CD8-positive, alpha-beta T cell (primary cell): ENCODE measurements at regions of chr7 and their contacts with region 1.

Region 1: DNA sequence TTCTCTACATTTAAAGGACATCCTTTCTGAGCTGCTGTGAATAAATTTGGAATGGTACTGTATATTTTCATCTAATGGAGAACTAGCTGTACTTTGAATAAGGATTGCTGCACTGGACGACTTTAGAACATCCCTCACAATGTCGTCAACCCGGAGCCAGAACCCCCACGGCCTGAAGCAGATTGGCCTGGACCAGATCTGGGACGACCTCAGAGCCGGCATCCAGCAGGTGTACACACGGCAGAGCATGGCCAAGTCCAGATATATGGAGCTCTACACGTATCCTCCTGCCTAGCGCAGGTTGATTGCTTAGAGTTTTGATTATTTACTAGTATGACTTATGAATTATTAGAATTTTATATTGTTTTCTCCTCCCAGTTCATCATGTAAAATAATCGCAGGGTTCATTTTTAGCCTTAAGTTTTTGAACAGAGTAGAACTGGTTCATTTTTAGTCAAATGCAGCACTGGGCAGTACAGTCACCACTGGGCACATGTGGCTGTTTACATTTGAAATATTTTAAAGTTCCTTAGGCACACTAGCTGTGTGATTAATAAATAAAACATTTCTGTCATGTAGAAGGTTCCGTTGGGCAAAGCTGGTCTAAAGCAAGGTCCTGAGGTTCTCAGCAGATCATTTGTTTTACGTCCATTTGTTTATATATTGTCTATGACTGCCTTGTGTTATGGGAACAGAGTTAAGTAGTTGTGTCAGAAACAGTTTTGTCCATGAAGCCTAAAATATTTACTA is 31.5 kb downstream of the CUL1 start:
- DNase-seq: no peak
- ATAC-seq: no peak
- H3K4me3 ChIP-seq: no peak overlapping the region
- H3K4me3 Mint-ChIP-seq: no peak overlapping the region
- H3K27ac ChIP-seq: no peak overlapping the region
- H3K27ac Mint-ChIP-seq: no peak overlapping the region
- H3K4me1 ChIP-seq: peaks cover 30% of the 10 kb centered on the region
- H3K4me1 Mint-ChIP-seq: peaks cover 66% of the 10 kb centered on the region
- H3K27me3 ChIP-seq: no peaks in the 10 kb centered on the region
- H3K27me3 Mint-ChIP-seq: no peaks in the 10 kb centered on the region
- CTCF ChIP-seq: no peak

Region 2: GRCh38 chr7:148067381-148067780 is 662.8 kb before region 1 on chr7:
- CTCF ChIA-PET with region 1: no interaction called
- POLR2A ChIA-PET with region 1: no interaction called
- intact Hi-C with region 1: no loop called
- DNase-seq: no peak
- ATAC-seq: no peak
- H3K4me3 ChIP-seq: no peak overlapping the region
- H3K4me3 Mint-ChIP-seq: no peak overlapping the region
- H3K27ac ChIP-seq: no peak overlapping the region
- H3K27ac Mint-ChIP-seq: no peak overlapping the region
- H3K4me1 ChIP-seq: no peaks in the 10 kb centered on the region
- H3K4me1 Mint-ChIP-seq: no peaks in the 10 kb centered on the region
- H3K27me3 ChIP-seq: no peaks in the 10 kb centered on the region
- H3K27me3 Mint-ChIP-seq: no peaks in the 10 kb centered on the region
- CTCF ChIP-seq: no peak

Region 3: GRCh38 chr7:148636273-148636672 is 93.9 kb before region 1 on chr7:
- CTCF ChIA-PET with region 1: no interaction called
- POLR2A ChIA-PET with region 1: no interaction called
- intact Hi-C with region 1: loop called in 1 of 2 experiments (anchors 1 kb)
- DNase-seq: no peak
- ATAC-seq: no peak
- H3K4me3 ChIP-seq: no peak overlapping the region
- H3K4me3 Mint-ChIP-seq: no peak overlapping the region
- H3K27ac ChIP-seq: no peak overlapping the region
- H3K27ac Mint-ChIP-seq: no peak overlapping the region
- H3K4me1 ChIP-seq: peaks cover 4% of the 10 kb centered on the region
- H3K4me1 Mint-ChIP-seq: peaks cover 17% of the 10 kb centered on the region
- H3K27me3 ChIP-seq: no peaks in the 10 kb centered on the region
- H3K27me3 Mint-ChIP-seq: peaks cover 9% of the 10 kb centered on the region
- CTCF ChIP-seq: no peak

Region 4: GRCh38 chr7:148773334-148773733 is 43.2 kb after region 1 on chr7:
- CTCF ChIA-PET with region 1: no interaction called
- POLR2A ChIA-PET with region 1: no interaction called
- intact Hi-C with region 1: loop called in 1 of 2 experiments (anchors 5 kb)
- DNase-seq: peak; percentile 2 to 76 (median 37)
- ATAC-seq: peak; percentile 90
- H3K4me3 ChIP-seq: no peak overlapping the region
- H3K4me3 Mint-ChIP-seq: peak overlapping the region; percentile 68
- H3K27ac ChIP-seq: peak overlapping the region; percentile 12 to 71
- H3K27ac Mint-ChIP-seq: peak overlapping the region; percentile 89
- H3K4me1 ChIP-seq: peaks cover 20% of the 10 kb centered on the region
- H3K4me1 Mint-ChIP-seq: peaks cover 30% of the 10 kb centered on the region
- H3K27me3 ChIP-seq: no peaks in the 10 kb centered on the region
- H3K27me3 Mint-ChIP-seq: no peaks in the 10 kb centered on the region
- CTCF ChIP-seq: no peak

Region 5: DNA sequence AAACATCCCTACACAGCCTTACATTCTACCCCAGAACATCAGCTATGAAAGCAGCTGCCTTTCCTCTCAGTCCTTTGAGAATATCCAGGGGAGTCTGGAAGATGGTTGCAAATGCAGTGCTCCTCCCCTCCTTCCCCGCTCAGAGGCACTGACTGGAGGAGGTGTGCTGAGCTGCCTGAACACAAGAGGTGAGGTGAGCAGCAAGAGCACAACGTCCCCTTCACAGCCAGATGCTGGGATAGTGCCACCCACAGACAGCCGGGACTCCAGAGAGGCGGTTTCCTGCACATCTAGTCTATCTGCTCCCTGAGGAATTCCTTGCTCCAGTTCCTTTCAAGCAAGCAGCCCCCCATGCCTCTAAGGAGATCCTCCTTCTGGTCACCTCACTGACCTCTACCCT is 79.7 kb after region 1 on chr7:
- CTCF ChIA-PET with region 1: no interaction called
- POLR2A ChIA-PET with region 1: no interaction called
- intact Hi-C with region 1: no loop called
- DNase-seq: no peak
- ATAC-seq: no peak
- H3K4me3 ChIP-seq: no peak overlapping the region
- H3K4me3 Mint-ChIP-seq: no peak overlapping the region
- H3K27ac ChIP-seq: no peak overlapping the region
- H3K27ac Mint-ChIP-seq: peak overlapping the region; percentile 30
- H3K4me1 ChIP-seq: no peaks in the 10 kb centered on the region
- H3K4me1 Mint-ChIP-seq: peaks cover 5% of the 10 kb centered on the region
- H3K27me3 ChIP-seq: no peaks in the 10 kb centered on the region
- H3K27me3 Mint-ChIP-seq: no peaks in the 10 kb centered on the region
- CTCF ChIP-seq: no peak